ENCODE measurements at regions of chr12 and their contacts with region 1.

Region 1: GRCh38 chr12:56041552-56042429 is at the start of gene RPS26:
- DNase-seq: peak; percentile 96
- H3K4me3 ChIP-seq: peak within 1 kb of the TSS; percentile 51 to 80 (median 68)
- H3K27ac ChIP-seq: peak within 1 kb of the TSS; percentile 90 to 93 (median 90)
- H3K4me1 ChIP-seq: peaks cover 11 to 24% (median 20%) of the 10 kb centered on the region in 4 donors
- H3K27me3 ChIP-seq: no peaks in the 10 kb centered on the region
- CTCF ChIP-seq: peak in 4 of 5 experiments; percentile 7 to 62 (median 36)
- EP300 ChIP-seq: no peak
- POLR2A ChIP-seq: peak; percentile 99
- total RNA-seq, gene RPS26: 283 to 2,670 (median 937) TPM

Region 2: DNA sequence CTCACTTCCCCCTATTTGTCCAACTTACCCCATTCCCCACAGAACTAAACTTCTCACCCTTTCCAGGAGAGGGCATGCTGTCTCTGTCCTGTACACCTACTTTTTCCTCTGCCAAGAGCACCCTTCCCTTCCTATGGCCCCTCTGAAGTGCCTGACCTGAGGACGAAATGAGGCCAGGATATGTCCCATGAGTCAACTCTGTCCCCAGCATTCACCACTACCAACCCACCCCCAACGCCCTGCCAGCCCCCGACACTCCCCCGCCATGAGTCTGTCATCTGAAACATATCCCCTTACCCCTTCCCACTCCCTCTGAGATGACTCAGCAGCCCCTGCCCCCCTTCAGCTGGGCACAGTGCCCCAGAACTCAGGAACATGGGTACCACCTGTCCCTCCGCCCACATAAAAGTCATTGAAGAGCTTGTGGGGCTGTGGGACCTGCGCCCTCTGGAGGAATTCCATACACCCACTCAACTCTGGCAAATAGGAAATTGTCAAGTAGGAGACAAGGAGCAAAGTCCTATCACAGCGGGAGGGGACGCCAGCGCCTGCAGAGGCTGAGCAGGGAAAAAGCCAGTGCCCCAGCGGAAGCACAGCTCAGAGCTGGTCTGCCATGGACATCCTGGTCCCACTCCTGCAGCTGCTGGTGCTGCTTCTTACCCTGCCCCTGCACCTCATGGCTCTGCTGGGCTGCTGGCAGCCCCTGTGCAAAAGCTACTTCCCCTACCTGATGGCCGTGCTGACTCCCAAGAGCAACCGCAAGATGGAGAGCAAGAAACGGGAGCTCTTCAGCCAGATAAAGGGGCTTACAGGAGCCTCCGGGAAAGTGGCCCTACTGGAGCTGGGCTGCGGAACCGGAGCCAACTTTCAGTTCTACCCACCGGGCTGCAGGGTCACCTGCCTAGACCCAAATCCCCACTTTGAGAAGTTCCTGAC is 360.4 kb before region 1 on chr12:
- in situ Hi-C with region 1: no loop called
- intact Hi-C with region 1: no loop called
- DNase-seq: peak; percentile 85
- H3K4me3 ChIP-seq: peak overlapping the region; percentile 18 to 55 (median 40)
- H3K27ac ChIP-seq: peak overlapping the region; percentile 67 to 83 (median 74)
- H3K4me1 ChIP-seq: peaks cover 7 to 26% (median 15%) of the 10 kb centered on the region in 4 donors
- H3K27me3 ChIP-seq: no peaks in the 10 kb centered on the region
- CTCF ChIP-seq: peak; percentile 34 to 71 (median 48)
- EP300 ChIP-seq: no peak
- POLR2A ChIP-seq: peak; percentile 70

Region 3: DNA sequence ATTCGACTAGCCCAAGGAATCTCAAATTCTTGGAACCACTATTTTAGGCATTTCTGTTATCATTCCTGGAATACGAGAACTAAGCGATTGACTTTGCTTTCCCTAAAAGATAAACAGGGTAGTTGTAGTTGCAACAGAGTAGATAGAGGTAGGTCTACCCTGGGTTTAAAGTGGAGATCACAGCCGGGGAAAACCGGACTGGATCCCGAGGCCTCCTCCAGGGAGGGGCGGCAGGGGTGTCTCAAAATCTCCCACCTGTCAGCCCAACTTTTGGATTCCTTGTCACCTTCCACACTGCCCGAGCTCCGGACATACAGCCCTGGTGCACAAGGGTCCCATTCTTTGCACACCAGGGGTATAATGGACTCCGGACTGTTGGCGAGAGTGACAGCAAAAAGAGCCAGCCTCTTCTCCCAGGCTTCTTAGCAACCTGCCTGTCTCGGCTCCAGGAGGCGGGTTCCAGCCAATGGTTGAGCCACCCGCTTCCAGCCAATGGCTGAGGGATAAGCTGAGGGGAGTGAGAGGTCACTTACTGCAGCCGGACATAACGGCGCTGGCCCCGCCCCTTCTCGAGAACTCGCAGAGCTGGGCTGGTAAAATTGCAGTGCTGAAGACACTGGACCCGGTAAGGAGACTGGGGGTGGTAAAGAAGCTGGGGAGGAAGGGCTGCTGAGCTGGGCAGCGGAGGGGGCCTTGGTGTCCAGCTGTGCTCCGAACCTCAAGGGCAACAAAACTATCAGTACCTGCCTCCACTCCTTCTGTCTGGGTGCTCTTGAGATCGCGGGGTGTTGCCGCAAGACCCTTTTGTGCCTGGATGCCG is 44.9 kb before region 1 on chr12 and contains the start of gene SUOX:
- in situ Hi-C with region 1: loop called in 1 of 4 experiments (anchors 10 kb)
- intact Hi-C with region 1: no loop called
- DNase-seq: peak; percentile 97
- H3K4me3 ChIP-seq: peak within 1 kb of the TSS; percentile 54 to 67 (median 56)
- H3K27ac ChIP-seq: peak within 1 kb of the TSS; percentile 87 to 92 (median 90)
- H3K4me1 ChIP-seq: peaks cover 0 to 40% (median 26%) of the 10 kb centered on the region in 4 donors
- H3K27me3 ChIP-seq: no peaks in the 10 kb centered on the region
- CTCF ChIP-seq: no peak
- EP300 ChIP-seq: no peak
- POLR2A ChIP-seq: peak; percentile 83
- total RNA-seq, gene SUOX: 30.1 to 45.3 (median 33.9) TPM

Region 4: GRCh38 chr12:56007564-56008559 is 33.9 kb before region 1 on chr12:
- in situ Hi-C with region 1: no loop called
- intact Hi-C with region 1: loop called (anchors 5 kb)
- DNase-seq: peak; percentile 70
- H3K4me3 ChIP-seq: peak overlapping the region; percentile 79 to 89 (median 84)
- H3K27ac ChIP-seq: peak overlapping the region; percentile 92 to 96 (median 94)
- H3K4me1 ChIP-seq: peaks cover 0 to 20% (median 9%) of the 10 kb centered on the region in 4 donors
- H3K27me3 ChIP-seq: no peaks in the 10 kb centered on the region
- CTCF ChIP-seq: peak in 1 of 5 experiments; percentile 2
- EP300 ChIP-seq: no peak
- POLR2A ChIP-seq: no peak

Measured in transverse colon (tissue), 4 donors.